ENCODE measurements at regions of chr12 and their contacts with region 1.

Region 1: GRCh38 chr12:94149119-94149780 is 873 bp downstream of the PLXNC1 start:
- DNase-seq: peak; percentile 34 to 41
- H3K4me3 ChIP-seq: peak overlapping the region; percentile 24 to 47 (median 46)
- H3K27ac ChIP-seq: no peak overlapping the region
- H3K4me1 ChIP-seq: peaks cover 15 to 17% of the 10 kb centered on the region in 2 donors
- H3K27me3 ChIP-seq: no peaks in the 10 kb centered on the region
- CTCF ChIP-seq: no peak
- POLR2A ChIP-seq: no peak

Region 2: DNA sequence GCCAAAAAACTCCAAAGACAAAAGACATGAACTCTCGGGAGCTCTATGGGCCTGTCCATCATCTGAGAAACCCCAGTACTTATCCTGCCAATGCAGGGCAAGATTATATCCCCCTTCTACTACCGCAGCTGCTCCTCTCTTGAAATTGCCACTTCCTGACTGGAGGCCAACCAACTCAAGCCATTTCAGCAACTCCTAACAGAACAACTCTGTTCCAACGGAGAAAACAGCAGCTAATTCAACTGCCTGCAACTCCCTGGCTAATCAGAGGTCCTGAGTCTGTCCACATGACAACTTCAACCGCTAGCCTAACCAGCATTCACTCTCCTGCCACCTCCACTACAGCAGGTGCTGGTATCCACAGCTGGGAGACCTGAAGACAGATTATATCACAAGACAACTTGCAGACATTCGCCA is 286.3 kb after region 1 on chr12:
- intact Hi-C with region 1: loop called (anchors 10 kb)
- DNase-seq: peak in 1 of 2 donors; percentile 2
- H3K4me3 ChIP-seq: no peak overlapping the region
- H3K27ac ChIP-seq: no peak overlapping the region
- H3K4me1 ChIP-seq: peaks cover 0 to 5% of the 10 kb centered on the region in 2 donors
- H3K27me3 ChIP-seq: no peaks in the 10 kb centered on the region
- CTCF ChIP-seq: no peak
- POLR2A ChIP-seq: no peak

Region 3: GRCh38 chr12:94586589-94587259 is 437.5 kb after region 1 on chr12:
- intact Hi-C with region 1: no loop called
- DNase-seq: no peak
- H3K4me3 ChIP-seq: no peak overlapping the region
- H3K27ac ChIP-seq: peak overlapping the region; percentile 13 to 64 (median 49)
- H3K4me1 ChIP-seq: peaks cover 22 to 37% of the 10 kb centered on the region in 2 donors
- H3K27me3 ChIP-seq: no peaks in the 10 kb centered on the region
- CTCF ChIP-seq: no peak
- POLR2A ChIP-seq: no peak

Measured in thyroid gland (tissue), 4 donors.